Right cardiac atrium (tissue), 5 donors: ENCODE measurements at regions of chr19 and their contacts with region 1.

Region 1: DNA sequence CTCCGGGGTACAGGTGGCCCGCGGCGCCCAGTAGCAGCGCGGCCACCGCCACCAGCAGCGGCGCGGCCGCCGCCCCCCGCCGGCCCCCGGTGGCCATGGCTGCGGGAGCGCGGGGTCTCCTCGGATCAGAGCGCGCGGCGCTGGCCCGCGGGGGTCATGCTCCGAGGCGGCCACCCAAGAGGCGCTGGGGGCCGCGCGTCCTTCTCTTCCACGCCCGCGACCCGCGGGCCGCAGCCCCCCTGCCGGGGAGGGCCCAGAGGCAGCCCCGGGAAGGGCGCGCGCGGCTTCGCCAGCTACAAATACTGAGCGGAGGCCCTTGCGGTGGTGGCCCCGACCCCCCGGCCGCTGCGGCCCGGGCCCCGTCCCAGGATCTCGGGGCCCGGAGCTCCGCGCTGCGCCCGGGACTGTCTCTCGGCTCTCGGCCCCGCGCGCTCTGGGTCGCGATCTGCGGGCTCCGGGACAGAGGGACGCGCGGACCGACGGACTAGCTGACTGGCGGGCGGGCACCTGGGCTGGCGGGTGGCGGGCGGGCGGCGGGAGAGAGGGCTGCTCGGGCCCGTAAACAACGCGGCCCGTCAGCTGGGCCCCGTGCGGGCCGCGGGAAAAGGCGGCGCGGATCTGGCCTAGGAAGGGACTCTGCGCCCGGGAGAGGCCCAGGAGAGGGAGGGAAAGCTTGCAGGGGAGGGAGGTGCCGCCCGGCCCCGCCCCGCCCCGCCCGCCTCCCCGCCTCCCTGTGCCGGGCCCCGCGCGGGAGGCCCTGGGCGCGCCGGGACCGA is at the start of gene INSR:
- DNase-seq: peak; percentile 90 to 97 (median 95)
- ATAC-seq: peak; percentile 97
- H3K4me3 ChIP-seq: peak within 1 kb of the TSS; percentile 95
- H3K27ac ChIP-seq: peak within 1 kb of the TSS; percentile 92
- H3K4me1 ChIP-seq: peaks cover 5% of the 10 kb centered on the region
- H3K27me3 ChIP-seq: no peaks in the 10 kb centered on the region
- total RNA-seq, gene INSR: 48.2 to 58.6 (median 55.8) TPM

Region 2: DNA sequence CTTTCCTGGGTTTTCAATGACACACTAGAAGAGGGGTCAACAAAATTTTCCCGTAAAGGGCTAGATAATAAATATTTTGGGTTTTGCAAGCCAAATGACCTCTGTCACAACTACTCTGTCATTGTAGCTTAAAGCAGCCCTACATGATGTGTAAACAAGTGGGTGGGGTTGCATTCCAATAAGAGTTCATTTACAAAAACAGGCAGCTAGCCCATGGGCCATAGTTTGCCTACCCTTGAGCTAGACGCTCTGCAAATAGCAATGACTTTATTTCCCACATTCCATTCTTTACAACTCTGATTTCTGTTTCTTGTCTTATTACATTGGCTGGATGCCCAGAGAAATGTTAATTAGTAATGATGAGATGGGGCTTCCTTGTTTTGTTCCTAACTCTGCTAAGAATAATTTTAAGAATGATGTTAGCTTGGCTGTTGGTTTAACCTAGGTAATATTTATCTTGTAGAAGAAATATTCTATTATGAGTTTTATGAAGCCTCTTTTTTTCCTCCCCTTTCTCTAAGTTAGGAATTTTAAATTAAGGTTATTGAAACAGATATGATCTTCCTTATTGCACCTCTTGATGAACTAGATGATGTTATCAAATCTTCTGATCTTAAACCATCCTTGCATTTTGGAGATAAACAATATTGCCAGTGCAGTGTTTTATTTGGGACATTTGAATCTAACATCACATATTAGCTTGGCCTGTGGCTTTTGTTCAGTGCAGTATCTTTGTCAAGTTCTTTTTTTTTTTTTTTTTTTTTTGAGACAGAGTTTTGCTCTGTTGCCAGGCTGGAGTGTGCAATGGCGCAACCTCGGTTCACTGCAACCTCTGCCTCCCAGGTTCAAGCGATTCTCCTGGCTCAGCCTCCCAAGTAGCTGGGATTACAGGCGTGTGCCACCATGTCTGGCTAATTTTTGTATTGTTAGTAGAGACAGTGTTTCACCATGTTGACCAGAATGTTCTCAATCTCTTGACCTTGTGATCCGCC is 148.2 kb before region 1 on chr19:
- intact Hi-C with region 1: loop called in 2 of 4 experiments (anchors 5 to 10 kb)
- DNase-seq: no peak
- ATAC-seq: no peak
- H3K4me3 ChIP-seq: no peak overlapping the region
- H3K27ac ChIP-seq: no peak overlapping the region
- H3K4me1 ChIP-seq: no peaks in the 10 kb centered on the region
- H3K27me3 ChIP-seq: no peaks in the 10 kb centered on the region

Region 3: DNA sequence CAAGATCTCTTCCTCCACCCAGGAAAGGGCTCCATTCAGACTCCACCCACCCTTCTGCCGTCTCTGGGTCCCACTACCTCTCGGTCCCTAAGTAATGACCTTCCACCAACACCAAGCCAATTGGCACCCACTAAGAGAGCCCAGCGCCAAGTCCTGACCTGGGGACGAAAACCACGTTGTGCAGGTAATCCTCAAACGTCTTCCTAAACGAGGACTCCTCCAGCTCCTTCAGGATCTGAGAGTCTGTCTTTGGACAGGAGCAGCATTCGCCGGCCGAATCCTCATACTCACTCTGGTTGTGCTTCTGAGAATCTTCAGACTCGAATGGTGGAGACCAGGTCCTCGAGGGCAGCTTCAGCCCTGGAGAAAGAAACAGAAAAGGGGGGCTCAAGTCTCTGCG is 141.4 kb before region 1 on chr19:
- intact Hi-C with region 1: loop called in 2 of 4 experiments (anchors 5 to 10 kb)
- DNase-seq: no peak
- ATAC-seq: no peak
- H3K4me3 ChIP-seq: no peak overlapping the region
- H3K27ac ChIP-seq: no peak overlapping the region
- H3K4me1 ChIP-seq: peaks cover 3% of the 10 kb centered on the region
- H3K27me3 ChIP-seq: no peaks in the 10 kb centered on the region

Region 4: GRCh38 chr19:7197760-7198696 is 96.0 kb before region 1 on chr19:
- intact Hi-C with region 1: loop called in 3 of 4 experiments (anchors 2 to 5 kb)
- DNase-seq: peak; percentile 95 to 98 (median 98)
- ATAC-seq: peak; percentile 95
- H3K4me3 ChIP-seq: peak overlapping the region; percentile 65
- H3K27ac ChIP-seq: peak overlapping the region; percentile 90
- H3K4me1 ChIP-seq: no peaks in the 10 kb centered on the region
- H3K27me3 ChIP-seq: no peaks in the 10 kb centered on the region

Region 5: GRCh38 chr19:7312816-7313215 is 18.8 kb after region 1 on chr19:
- intact Hi-C with region 1: no loop called
- DNase-seq: no peak
- ATAC-seq: peak; percentile 55 to 78
- H3K4me3 ChIP-seq: no peak overlapping the region
- H3K27ac ChIP-seq: no peak overlapping the region
- H3K4me1 ChIP-seq: no peaks in the 10 kb centered on the region
- H3K27me3 ChIP-seq: no peaks in the 10 kb centered on the region